Activated CD8-positive, alpha-beta T cell treated with anti-CD3 and anti-CD28 coated beads for 36 hours (primary cell): ENCODE measurements at regions of chr5 and their contacts with region 1.

Region 1: GRCh38 chr5:170225326-170226128 is 7.3 kb upstream of the C5orf58 start:
- DNase-seq: peak; percentile 91
- ATAC-seq: peak; percentile 80
- H3K4me3 Mint-ChIP-seq: no peak overlapping the region
- H3K27ac Mint-ChIP-seq: no peak overlapping the region
- H3K4me1 Mint-ChIP-seq: peaks cover 5% of the 10 kb centered on the region
- H3K27me3 Mint-ChIP-seq: no peaks in the 10 kb centered on the region
- CTCF ChIP-seq: peak; percentile 74

Region 2: GRCh38 chr5:170093767-170094166 is 131.8 kb before region 1 on chr5:
- CTCF ChIA-PET with region 1: no interaction called
- POLR2A ChIA-PET with region 1: no interaction called
- intact Hi-C with region 1: no loop called
- DNase-seq: no peak
- ATAC-seq: no peak
- H3K4me3 Mint-ChIP-seq: no peak overlapping the region
- H3K27ac Mint-ChIP-seq: no peak overlapping the region
- H3K4me1 Mint-ChIP-seq: no peaks in the 10 kb centered on the region
- H3K27me3 Mint-ChIP-seq: no peaks in the 10 kb centered on the region
- CTCF ChIP-seq: no peak

Region 3: GRCh38 chr5:170247363-170247762 is 21.8 kb after region 1 on chr5:
- CTCF ChIA-PET with region 1: interaction called, 20 read pairs
- POLR2A ChIA-PET with region 1: interaction called, 4 read pairs
- intact Hi-C with region 1: no loop called
- DNase-seq: no peak
- ATAC-seq: no peak
- H3K4me3 Mint-ChIP-seq: no peak overlapping the region
- H3K27ac Mint-ChIP-seq: no peak overlapping the region
- H3K4me1 Mint-ChIP-seq: peaks cover 35% of the 10 kb centered on the region
- H3K27me3 Mint-ChIP-seq: no peaks in the 10 kb centered on the region
- CTCF ChIP-seq: no peak

Region 4: DNA sequence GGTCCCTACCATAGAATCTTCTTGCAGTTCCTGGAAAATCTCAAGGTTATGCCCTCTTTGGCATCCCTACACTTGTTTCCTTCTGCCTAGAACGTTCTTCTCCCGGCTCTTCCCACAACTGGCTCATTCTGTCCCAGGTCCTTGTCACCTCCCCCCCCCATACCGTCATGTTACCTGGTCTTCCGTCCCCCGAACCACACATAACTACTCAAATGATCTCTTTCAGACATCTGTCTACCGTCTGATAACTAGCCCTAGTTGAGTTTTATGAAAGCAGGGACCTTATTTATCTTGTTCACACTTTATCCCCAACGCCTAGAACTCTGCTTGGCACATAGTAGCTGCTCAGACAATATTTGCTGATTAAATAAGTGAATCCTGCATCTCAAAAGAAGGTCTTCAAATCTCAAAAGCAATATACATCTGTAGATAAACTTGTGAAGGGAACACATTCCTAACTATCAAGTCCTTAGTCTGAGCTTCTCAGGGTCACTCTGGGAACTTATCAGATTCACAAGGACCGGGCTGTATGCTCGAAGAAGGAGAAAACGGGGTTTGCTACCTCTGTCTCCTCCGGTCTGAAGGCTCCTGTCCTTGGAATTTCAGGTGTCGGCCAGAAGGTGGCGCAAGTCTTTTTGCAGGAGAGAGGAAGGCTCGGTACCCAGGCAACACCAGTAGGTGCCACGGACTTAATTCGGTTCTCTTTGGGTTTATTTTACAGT is 42.1 kb after region 1 on chr5:
- CTCF ChIA-PET with region 1: interaction called, 46 read pairs
- POLR2A ChIA-PET with region 1: interaction called, 3 read pairs
- intact Hi-C with region 1: no loop called
- DNase-seq: peak; percentile 84
- ATAC-seq: peak; percentile 26
- H3K4me3 Mint-ChIP-seq: peak overlapping the region; percentile 56
- H3K27ac Mint-ChIP-seq: peak overlapping the region; percentile 93
- H3K4me1 Mint-ChIP-seq: peaks cover 95% of the 10 kb centered on the region
- H3K27me3 Mint-ChIP-seq: no peaks in the 10 kb centered on the region
- CTCF ChIP-seq: peak; percentile 91

Region 5: DNA sequence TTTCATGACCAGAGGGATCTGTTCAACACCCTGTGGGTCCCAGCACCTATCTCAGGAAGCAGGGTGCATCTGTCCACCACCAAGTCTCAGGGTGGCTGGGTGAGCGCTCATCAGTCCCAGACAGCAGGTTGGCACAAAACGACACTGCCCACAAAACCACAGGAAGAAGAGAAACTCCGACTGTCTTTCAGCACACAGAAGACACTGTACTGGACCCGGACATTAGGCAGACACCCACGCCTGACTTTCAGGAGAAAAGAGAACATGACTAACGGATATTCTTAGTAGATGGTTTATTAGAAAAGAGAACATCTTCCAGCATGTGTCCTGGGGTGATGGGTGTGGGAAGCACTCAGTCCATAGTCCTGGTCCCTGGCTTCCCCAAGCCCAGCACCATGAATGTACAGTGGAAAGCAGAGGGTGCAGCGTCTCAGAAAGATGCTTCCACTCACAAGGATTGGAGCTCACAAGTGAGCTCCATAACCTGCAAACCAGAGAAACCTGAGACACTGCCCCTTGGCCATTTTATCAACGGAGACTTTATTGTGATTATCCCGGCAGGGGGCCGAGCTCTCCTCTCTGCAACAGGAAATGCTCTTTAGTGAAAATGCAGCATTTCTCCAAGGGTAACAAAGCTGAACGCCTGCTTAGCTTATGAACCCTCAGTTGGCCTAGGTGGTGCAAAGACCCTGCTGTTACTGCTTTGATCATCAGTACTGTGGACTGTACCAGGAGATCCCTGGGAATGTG is 107.8 kb after region 1 on chr5:
- CTCF ChIA-PET with region 1: interaction called, 228 read pairs
- POLR2A ChIA-PET with region 1: interaction called, 10 read pairs
- intact Hi-C with region 1: loop called (anchors 1 kb)
- DNase-seq: peak; percentile 90
- ATAC-seq: peak; percentile 35
- H3K4me3 Mint-ChIP-seq: no peak overlapping the region
- H3K27ac Mint-ChIP-seq: no peak overlapping the region
- H3K4me1 Mint-ChIP-seq: peaks cover 30% of the 10 kb centered on the region
- H3K27me3 Mint-ChIP-seq: no peaks in the 10 kb centered on the region
- CTCF ChIP-seq: no peak

Region 6: DNA sequence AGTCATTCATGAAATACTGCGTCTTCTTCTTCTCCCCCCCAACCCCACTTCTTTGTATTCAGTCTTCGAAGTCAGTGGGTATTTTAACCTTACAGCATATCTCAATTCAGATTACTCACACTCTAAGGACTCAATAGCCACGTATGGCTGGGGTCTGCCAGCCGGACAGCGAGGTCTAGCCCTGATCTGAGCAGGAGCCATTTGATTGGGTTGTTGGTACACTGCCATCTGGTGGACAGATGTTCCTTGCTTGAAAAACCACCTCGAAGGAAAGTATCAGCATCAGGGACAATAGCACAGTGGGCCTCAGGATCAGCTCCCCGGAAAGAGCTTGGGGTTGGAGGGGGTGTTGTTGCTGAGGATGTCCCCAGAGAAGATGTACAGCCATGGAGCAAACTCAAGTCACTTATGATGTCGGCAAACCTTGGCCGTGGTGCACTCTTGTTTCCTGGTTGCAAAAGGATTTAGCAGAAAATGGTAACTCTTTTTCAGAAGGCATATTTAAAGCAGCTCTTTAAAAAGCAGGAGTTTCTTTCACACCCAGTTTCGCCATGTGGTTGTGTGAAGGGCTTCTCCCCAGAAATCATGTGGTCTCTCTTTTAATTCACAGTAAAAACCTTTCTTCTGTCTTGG is 195.4 kb after region 1 on chr5:
- CTCF ChIA-PET with region 1: interaction called, 170 read pairs
- POLR2A ChIA-PET with region 1: no interaction called
- intact Hi-C with region 1: loop called (anchors 2 kb)
- DNase-seq: peak; percentile 72
- ATAC-seq: peak; percentile 75
- H3K4me3 Mint-ChIP-seq: no peak overlapping the region
- H3K27ac Mint-ChIP-seq: no peak overlapping the region
- H3K4me1 Mint-ChIP-seq: peaks cover 12% of the 10 kb centered on the region
- H3K27me3 Mint-ChIP-seq: no peaks in the 10 kb centered on the region
- CTCF ChIP-seq: peak; percentile 67